RWPE1 (cell line): ENCODE measurements at regions of chr15 and their contacts with region 1.

Region 1: GRCh38 chr15:38563723-38564519 is 693 bp downstream of the RASGRP1 start:
- DNase-seq: peak; percentile 62
- H3K27ac ChIP-seq: no peak overlapping the region
- CTCF ChIP-seq: peak; percentile 94

Region 2: GRCh38 chr15:38504680-38505467 is 59.0 kb before region 1 on chr15:
- CTCF ChIA-PET with region 1: no interaction called
- POLR2A ChIA-PET with region 1: no interaction called
- DNase-seq: no peak
- H3K27ac ChIP-seq: no peak overlapping the region
- CTCF ChIP-seq: no peak

Region 3: DNA sequence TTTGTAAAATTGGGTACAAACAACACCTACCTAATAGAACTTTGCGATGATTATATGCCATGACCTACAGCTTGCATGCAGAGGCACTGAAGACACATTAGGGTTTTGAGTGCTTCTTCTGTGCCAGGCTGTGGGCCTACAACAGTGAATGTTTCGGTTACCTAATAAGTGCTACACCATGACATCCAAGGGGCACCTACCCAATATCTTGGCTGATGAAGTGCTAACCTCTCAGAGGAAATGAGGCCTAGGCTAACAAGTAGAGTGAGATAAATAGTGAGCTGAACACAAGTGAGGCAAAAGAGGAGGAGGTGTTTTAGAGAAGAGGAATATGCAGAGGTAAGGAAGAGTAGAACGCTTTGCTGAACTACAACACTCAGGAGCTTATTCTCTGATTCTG is 12.9 kb after region 1 on chr15:
- CTCF ChIA-PET with region 1: interaction called, 11 read pairs
- POLR2A ChIA-PET with region 1: no interaction called
- DNase-seq: no peak
- H3K27ac ChIP-seq: no peak overlapping the region
- CTCF ChIP-seq: no peak

Region 4: GRCh38 chr15:38626443-38627050 is 62.6 kb after region 1 on chr15:
- CTCF ChIA-PET with region 1: interaction called, 12 read pairs
- POLR2A ChIA-PET with region 1: no interaction called
- DNase-seq: no peak
- H3K27ac ChIP-seq: no peak overlapping the region
- CTCF ChIP-seq: no peak

Region 5: DNA sequence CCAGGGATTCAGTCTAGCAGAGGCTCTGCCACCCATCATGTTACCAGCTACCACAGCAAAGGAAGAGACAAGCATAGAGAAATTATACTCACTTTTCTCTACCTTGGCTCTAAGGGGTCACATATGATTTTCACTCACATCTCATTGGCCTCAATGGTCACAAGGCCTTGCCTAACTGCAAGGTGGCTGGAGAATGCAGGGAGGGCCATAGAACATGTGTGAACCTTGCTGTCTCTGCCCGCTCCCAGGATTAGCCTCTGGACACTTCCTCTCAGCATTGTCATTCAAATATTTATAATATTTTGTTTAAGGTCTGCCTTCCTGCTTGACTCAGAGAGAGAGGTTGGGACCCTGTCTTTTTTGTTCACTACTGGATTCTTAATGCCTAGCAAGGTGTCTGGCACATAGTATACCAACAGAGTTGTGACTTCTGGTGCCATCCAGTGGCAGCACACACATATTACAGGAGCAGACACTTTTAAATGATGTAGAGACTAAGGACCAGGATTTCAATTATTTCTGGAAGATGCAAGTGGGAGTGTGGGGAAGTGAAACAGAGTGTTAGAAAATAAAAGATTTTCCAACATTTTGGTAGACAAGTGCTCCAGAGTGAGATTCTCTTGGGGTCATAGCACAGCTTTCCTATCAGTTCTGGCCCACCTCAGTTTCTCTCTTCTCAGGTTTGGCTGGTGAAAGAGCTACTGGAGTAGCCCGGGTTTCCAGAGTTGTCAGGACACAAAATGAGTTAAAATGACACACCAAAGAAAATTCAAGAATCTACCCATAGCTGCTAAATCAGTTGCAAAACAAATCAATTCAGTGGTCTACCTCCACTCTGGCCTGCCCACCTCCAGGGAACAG is 119.7 kb after region 1 on chr15:
- CTCF ChIA-PET with region 1: interaction called, 26 read pairs
- POLR2A ChIA-PET with region 1: no interaction called
- DNase-seq: peak; percentile 50
- H3K27ac ChIP-seq: no peak overlapping the region
- CTCF ChIP-seq: peak; percentile 86